ENCODE measurements at regions of chr1 and their contacts with region 1.

Region 1: GRCh38 chr1:30111431-30111830 is 612.0 kb downstream of the MATN1 start:
- DNase-seq: peak; percentile 57
- H3K4me3 Mint-ChIP-seq: no peak overlapping the region
- H3K27ac Mint-ChIP-seq: no peak overlapping the region
- H3K4me1 Mint-ChIP-seq: peaks cover 6% of the 10 kb centered on the region
- H3K27me3 Mint-ChIP-seq: peaks cover 72% of the 10 kb centered on the region
- CTCF ChIP-seq: peak; percentile 67

Region 2: GRCh38 chr1:29341936-29342335 is 769.5 kb before region 1 on chr1:
- CTCF ChIA-PET with region 1: interaction called, 3 read pairs
- POLR2A ChIA-PET with region 1: no interaction called
- intact Hi-C with region 1: loop called (anchors 5 kb)
- DNase-seq: peak; percentile 6
- H3K4me3 Mint-ChIP-seq: no peak overlapping the region
- H3K27ac Mint-ChIP-seq: no peak overlapping the region
- H3K4me1 Mint-ChIP-seq: no peaks in the 10 kb centered on the region
- H3K27me3 Mint-ChIP-seq: peaks cover 42% of the 10 kb centered on the region
- CTCF ChIP-seq: no peak

Region 3: DNA sequence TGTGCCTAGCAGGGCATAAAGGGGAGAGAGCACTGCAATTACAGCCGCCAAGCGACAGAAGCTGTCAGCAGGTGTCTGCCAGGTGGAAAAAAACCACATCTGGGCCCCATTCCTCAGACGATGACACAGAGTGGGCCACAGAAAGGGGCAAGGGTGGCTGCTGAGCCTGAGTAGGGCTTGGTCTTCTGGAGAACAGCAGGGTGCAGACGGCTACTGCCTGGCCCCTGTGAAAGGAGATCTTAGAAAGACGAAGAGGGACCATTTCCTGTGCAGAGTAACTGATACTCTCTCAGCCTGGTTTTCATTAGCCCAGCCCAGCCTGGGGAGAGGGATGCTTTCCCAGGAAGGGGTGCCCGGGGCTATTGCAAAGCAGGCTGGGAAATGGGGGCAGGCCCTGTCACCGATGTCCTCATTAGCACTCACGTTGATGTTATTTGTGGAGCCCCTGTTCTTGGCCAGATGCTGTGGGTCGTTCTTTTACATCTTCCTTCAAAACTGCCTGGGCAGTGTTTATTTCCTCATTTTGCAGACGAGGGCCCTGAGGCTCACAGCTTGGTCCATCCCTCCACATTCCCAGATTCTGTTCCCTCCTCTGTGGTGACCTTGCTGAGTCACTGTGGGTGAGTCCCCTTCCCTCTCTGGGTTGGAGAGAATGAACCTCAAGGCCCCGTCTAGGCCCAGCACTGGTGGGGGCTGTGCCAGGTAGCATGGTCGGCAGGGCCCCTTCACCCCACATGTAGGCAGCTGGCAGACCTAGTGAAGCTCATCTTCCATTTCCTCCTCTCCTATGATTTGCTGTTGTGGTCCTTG is 402.3 kb before region 1 on chr1:
- CTCF ChIA-PET with region 1: no interaction called
- POLR2A ChIA-PET with region 1: no interaction called
- intact Hi-C with region 1: loop called (anchors 2 kb)
- DNase-seq: peak; percentile 91
- H3K4me3 Mint-ChIP-seq: peak overlapping the region; percentile 4
- H3K27ac Mint-ChIP-seq: peak overlapping the region; percentile 88
- H3K4me1 Mint-ChIP-seq: peaks cover 51% of the 10 kb centered on the region
- H3K27me3 Mint-ChIP-seq: no peaks in the 10 kb centered on the region
- CTCF ChIP-seq: no peak

Region 4: DNA sequence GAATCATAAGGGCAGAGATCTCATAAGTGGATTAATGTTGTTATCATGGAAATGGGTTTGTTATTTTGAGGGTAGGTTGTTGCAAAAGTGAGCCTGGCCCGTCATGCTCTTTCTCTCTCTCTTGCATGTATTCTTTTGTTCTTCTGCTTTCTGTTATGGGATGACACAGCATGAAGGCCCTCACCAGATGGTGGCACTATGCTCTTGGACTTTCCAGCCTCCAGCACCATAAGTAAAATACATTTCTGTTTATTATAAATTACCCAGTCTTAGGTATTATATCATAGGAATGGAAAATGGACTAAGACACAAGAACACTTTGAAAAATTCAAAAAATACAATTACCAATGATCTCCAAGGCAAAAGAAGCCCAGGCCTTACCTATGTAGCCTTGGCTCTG is 199.0 kb before region 1 on chr1:
- CTCF ChIA-PET with region 1: interaction called, 3 read pairs
- POLR2A ChIA-PET with region 1: no interaction called
- intact Hi-C with region 1: loop called (anchors 2 kb)
- DNase-seq: peak; percentile 53
- H3K4me3 Mint-ChIP-seq: no peak overlapping the region
- H3K27ac Mint-ChIP-seq: no peak overlapping the region
- H3K4me1 Mint-ChIP-seq: no peaks in the 10 kb centered on the region
- H3K27me3 Mint-ChIP-seq: peaks cover 38% of the 10 kb centered on the region
- CTCF ChIP-seq: peak; percentile 36

Measured in MCF 10A (cell line).